Tibial artery (tissue), 4 donors: ENCODE measurements at regions of chr15 and their contacts with region 1.

Region 1: GRCh38 chr15:31528846-31529245 is 202.2 kb downstream of the KLF13 start:
- DNase-seq: no peak
- H3K4me3 ChIP-seq: no peak overlapping the region
- H3K27ac ChIP-seq: no peak overlapping the region
- H3K4me1 ChIP-seq: no peaks in the 10 kb centered on the region
- H3K27me3 ChIP-seq: no peaks in the 10 kb centered on the region
- CTCF ChIP-seq: no peak

Region 2: GRCh38 chr15:31412824-31413223 is 116.0 kb before region 1 on chr15:
- intact Hi-C with region 1: no loop called
- DNase-seq: no peak
- H3K4me3 ChIP-seq: no peak overlapping the region
- H3K27ac ChIP-seq: no peak overlapping the region
- H3K4me1 ChIP-seq: no peaks in the 10 kb centered on the region
- H3K27me3 ChIP-seq: no peaks in the 10 kb centered on the region
- CTCF ChIP-seq: no peak

Region 3: DNA sequence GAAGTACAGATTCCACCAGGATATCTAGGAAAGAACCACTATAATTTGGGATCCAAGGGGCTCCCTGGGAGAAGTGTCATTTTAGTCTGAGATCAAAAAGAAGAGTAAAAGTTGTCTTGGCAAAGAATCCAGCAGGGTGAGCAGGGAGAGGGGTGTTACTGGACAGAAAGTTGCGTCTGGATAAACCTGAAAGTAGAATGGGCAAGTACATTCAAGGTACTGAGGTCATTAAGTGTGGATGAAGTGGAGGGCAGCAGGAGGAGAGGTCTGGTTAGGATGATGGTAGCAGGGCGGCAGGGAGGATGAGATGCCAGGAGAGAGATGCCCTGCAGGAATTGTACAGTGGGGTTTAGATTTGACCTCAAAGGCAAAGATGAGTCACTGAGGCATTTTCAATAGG is 51.1 kb after region 1 on chr15:
- intact Hi-C with region 1: loop called (anchors 2 kb)
- DNase-seq: no peak
- H3K4me3 ChIP-seq: no peak overlapping the region
- H3K27ac ChIP-seq: no peak overlapping the region
- H3K4me1 ChIP-seq: no peaks in the 10 kb centered on the region
- H3K27me3 ChIP-seq: no peaks in the 10 kb centered on the region
- CTCF ChIP-seq: no peak

Region 4: DNA sequence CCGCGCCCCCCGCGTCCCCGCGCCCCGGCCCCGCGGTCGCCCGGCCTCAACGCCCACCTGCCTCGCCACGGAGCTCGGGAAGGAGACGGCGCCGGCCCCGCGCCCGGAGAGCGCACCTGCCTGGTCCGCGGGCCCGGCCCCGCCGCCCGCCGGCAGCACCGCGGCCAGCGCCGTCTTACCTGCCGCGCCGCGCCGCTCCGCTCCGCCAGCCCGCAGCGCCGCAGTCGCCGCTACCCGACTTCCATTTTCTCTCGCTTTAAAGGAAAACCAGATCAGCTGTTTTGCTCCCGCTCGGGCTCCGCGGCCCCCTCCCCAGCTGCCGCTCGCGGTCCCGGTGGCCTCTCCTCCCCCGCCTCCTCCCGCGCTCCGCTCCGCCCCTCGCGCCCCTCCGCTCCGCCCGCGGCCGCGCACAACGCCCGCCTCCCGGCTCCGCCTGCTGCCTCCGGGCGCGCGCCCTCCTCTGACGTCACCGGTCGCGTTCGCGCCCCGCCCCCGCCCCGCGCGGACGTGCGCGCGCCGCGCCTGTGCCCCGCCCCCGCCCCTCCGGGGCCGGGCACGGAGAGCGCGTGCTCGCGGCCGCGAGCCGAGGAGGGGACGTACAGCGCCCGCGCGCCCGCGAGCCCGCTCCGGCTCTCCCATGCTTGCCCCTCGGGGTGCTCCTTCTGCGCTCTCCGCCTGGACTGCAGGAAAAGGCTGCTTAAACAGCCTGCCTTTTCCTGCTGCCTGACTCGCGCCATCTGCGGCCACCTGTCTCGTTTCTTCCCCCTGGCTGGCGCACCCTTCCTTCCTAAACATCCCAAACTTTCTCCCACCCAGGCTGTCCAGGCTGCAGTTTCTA is 341.7 kb after region 1 on chr15:
- intact Hi-C with region 1: no loop called
- DNase-seq: peak; percentile 70 to 90
- H3K4me3 ChIP-seq: peak within 1 kb of the TSS; percentile 66 to 69
- H3K27ac ChIP-seq: peak within 1 kb of the TSS; percentile 61 to 76
- H3K4me1 ChIP-seq: peaks cover 0 to 14% (median 4%) of the 10 kb centered on the region in 4 donors
- H3K27me3 ChIP-seq: no peaks in the 10 kb centered on the region
- CTCF ChIP-seq: no peak

Region 5: GRCh38 chr15:32014953-32015352 is 486.1 kb after region 1 on chr15:
- intact Hi-C with region 1: no loop called
- DNase-seq: no peak
- H3K4me3 ChIP-seq: no peak overlapping the region
- H3K27ac ChIP-seq: no peak overlapping the region
- H3K4me1 ChIP-seq: no peaks in the 10 kb centered on the region
- H3K27me3 ChIP-seq: no peaks in the 10 kb centered on the region
- CTCF ChIP-seq: no peak